ENCODE measurements at regions of chr6 and their contacts with region 1.

Region 1: DNA sequence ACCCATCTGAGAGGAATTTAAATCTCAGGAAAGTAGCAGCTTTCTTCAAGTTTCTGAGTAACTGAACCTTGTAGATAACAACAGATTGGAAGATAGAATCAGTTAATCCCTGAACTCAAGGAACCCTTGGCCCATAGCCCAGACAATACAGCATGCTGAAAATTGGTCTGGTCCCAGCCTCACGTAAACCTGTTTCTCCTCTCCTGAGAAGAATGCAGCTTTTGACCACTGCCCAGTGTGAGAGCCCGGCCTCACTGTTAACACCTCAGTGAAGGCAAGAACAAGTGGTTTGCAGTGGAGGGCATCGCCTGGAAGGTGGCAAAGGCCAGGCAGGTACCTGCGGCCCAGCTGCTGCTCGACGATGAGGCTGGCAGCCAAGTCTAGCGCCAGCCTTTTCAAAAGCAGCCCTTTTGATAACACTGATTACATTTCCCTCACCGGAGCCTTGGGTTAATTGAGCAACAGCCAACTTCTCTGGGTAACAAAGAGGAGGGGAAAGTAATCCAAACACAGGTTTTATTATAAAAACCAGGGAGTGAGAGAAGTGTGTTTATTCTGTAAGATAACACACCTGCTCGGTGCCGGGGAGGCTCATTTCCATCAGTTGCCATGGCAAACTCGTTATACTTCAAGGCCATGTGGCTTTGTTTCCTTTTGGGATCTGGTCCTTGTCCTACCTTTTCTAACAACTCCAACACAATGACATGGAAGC is 54.0 kb downstream of the TRAF3IP2 start:
- DNase-seq: no peak
- ATAC-seq: no peak
- H3K4me3 ChIP-seq: no peak overlapping the region
- H3K27ac ChIP-seq: no peak overlapping the region
- H3K4me1 ChIP-seq: no peaks in the 10 kb centered on the region
- H3K27me3 ChIP-seq: no peaks in the 10 kb centered on the region
- CTCF ChIP-seq: no peak
- EP300 ChIP-seq: no peak
- POLR2A ChIP-seq: no peak
- RAD21 ChIP-seq: no peak

Region 2: DNA sequence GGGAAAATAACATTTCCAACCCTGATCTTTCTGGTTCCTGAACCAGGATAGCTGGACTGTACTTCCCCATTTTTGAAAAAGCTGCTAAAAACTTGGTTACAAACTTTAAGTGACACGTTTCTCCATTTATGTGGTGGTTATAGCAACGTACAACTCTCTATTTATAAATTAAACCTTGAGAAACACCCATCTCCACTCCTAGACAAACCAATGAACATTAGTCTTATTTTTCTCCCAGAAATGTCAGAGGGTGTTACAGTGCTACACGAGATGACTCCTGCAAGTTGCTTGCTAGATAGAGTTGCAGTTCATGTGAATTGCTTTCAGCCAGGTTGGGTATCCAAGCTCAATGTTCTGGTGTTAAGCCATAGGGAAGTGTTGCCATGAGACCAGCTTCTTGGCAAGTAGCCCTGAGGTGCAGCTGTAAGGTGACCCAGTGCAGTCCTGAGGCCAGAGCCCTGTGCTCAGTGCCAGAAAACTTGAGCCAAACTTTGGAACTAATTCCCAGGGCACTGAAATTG is 17.4 kb before region 1 on chr6:
- CTCF ChIA-PET with region 1: interaction called, 5 read pairs
- POLR2A ChIA-PET with region 1: no interaction called
- RAD21 ChIA-PET with region 1: no interaction called
- SMC1A ChIA-PET with region 1: interaction called, 15 read pairs
- in situ Hi-C with region 1: no loop called
- intact Hi-C with region 1: no loop called
- DNase-seq: no peak
- ATAC-seq: no peak; the same call in 2 of the 3 replicates
- H3K4me3 ChIP-seq: no peak overlapping the region
- H3K27ac ChIP-seq: no peak overlapping the region
- H3K4me1 ChIP-seq: peaks cover 20% of the 10 kb centered on the region
- H3K27me3 ChIP-seq: no peaks in the 10 kb centered on the region
- CTCF ChIP-seq: no peak
- EP300 ChIP-seq: no peak
- POLR2A ChIP-seq: no peak
- RAD21 ChIP-seq: no peak

Region 3: GRCh38 chr6:111541026-111541681 is 10.5 kb before region 1 on chr6:
- CTCF ChIA-PET with region 1: interaction called, 4 read pairs
- POLR2A ChIA-PET with region 1: no interaction called
- RAD21 ChIA-PET with region 1: no interaction called
- SMC1A ChIA-PET with region 1: interaction called, 15 read pairs
- in situ Hi-C with region 1: no loop called
- intact Hi-C with region 1: no loop called
- DNase-seq: no peak
- ATAC-seq: no peak
- H3K4me3 ChIP-seq: no peak overlapping the region
- H3K27ac ChIP-seq: no peak overlapping the region
- H3K4me1 ChIP-seq: peaks cover 8% of the 10 kb centered on the region; the same call in 1 of the 2 replicates
- H3K27me3 ChIP-seq: no peaks in the 10 kb centered on the region
- CTCF ChIP-seq: no peak
- EP300 ChIP-seq: no peak
- POLR2A ChIP-seq: no peak
- RAD21 ChIP-seq: no peak

Measured in GM12878 (cell line).